Heart right ventricle (tissue), 16 donors: ENCODE measurements at regions of chr6 and their contacts with region 1.

Region 1: GRCh38 chr6:11585426-11586016 is 48.0 kb downstream of the TMEM170B start:
- DNase-seq: no peak
- ATAC-seq: peak in 1 of 8 donors; percentile 34
- H3K4me3 ChIP-seq: no peak overlapping the region
- H3K27ac ChIP-seq: no peak overlapping the region
- H3K4me1 ChIP-seq: peaks cover 0 to 13% (median 0%) of the 10 kb centered on the region in 9 donors
- H3K27me3 ChIP-seq: no peaks in the 10 kb centered on the region
- CTCF ChIP-seq: peak; percentile 20 to 83 (median 67)

Region 2: GRCh38 chr6:11639376-11640235 is 54.1 kb after region 1 on chr6:
- intact Hi-C with region 1: no loop called
- DNase-seq: no peak
- ATAC-seq: no peak
- H3K4me3 ChIP-seq: no peak overlapping the region
- H3K27ac ChIP-seq: no peak overlapping the region
- H3K4me1 ChIP-seq: no peaks in the 10 kb centered on the region
- H3K27me3 ChIP-seq: no peaks in the 10 kb centered on the region
- CTCF ChIP-seq: no peak

Region 3: DNA sequence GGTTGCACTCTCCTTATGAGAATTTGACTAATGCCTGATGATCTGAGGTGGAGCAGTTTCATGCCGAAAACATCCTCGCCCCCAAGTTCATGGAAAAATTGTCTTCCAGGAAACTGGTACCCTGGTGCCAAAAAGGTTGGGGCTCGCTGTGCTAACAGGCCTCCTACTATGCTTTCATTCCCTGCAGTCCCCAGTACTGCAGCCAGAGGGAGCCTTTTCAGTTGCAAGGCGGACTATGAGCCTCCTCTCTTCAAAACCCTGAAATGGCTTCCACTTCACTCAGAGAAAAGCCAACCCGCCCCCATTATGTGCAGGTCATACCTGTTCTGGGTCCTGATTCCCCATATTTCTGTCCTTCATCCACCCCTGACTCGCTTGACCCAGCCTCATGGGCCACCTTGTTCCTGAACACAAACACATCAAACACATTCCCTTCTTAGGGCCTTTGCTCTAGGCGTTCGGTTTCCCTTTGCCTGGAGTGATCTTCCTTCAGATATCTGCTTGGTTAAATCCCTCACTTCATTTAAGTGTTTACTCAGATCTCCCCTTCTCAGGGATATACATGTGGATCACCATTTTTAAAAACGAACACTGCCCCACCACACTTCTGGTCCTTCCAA is 1304.8 kb after region 1 on chr6:
- intact Hi-C with region 1: loop called in 1 of 10 experiments (anchors 5 kb)
- DNase-seq: no peak
- ATAC-seq: no peak
- H3K4me3 ChIP-seq: no peak overlapping the region
- H3K27ac ChIP-seq: no peak overlapping the region
- H3K4me1 ChIP-seq: peaks cover 0 to 20% (median 7%) of the 10 kb centered on the region in 9 donors
- H3K27me3 ChIP-seq: no peaks in the 10 kb centered on the region
- CTCF ChIP-seq: peak in 7 of 9 donors; percentile 12 to 50 (median 34)